Tibial artery (tissue), 4 donors: ENCODE measurements at regions of chr19 and their contacts with region 1.

Region 1: DNA sequence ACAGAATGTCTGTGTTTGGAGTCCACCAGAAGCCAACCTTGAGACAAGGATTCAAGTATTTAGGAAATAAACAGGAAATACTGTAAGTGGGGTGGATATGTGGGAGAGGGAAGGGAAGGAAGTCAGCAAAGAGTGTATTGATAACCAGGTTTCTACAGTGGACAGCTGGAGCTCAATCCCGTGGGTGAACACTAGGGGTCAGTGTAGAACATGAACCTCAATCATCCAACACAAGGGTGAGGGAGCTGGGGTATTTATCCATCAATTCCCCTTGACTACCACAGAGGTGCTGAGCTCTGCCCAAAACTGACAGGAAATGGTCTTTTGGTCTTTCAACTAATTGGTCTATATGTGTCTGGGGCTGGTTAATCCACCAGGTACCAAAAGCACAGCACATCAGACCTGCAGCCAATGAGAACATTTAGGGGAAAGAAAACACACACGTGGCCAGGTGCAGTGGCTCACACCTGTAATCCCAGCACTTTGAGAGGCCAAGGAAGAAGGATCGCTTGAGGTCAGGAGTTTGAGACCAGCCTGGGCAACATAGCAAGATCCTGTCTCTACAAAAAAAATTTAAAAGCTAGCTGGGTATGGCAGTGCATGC is 5.6 kb upstream of the SYDE1 start:
- DNase-seq: no peak
- H3K4me3 ChIP-seq: no peak overlapping the region
- H3K27ac ChIP-seq: no peak overlapping the region
- H3K4me1 ChIP-seq: peaks cover 0 to 4% (median 0%) of the 10 kb centered on the region in 4 donors
- H3K27me3 ChIP-seq: no peaks in the 10 kb centered on the region
- CTCF ChIP-seq: peak; percentile 64 to 65

Region 2: DNA sequence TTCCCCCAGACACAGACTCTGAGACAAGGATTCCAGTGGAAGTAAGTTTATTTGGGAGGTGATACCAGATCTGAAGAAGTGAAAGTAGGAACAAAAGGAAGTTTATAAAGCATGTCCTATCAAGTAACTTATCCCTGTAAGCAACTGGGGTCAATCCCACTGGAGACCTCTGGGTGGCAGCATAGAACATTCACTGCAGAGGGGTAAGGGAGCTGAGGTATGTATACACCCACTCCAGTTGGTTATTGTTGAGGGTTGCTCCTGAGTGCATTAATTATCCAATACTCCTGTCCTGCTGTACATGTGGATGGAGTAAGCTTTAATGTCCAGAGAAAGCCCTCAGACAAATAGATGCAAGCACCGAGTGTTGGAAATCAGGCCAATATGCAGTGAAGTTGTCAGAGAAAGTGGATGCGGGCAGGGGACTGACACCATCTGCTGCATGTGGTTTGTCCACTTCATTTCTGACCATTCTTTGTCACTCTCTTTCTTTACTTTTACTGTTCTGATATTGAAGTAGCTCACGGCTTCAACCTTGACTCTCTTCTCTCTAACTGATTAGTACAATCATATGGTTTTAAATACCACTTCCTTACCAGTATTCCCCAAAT is 52.5 kb after region 1 on chr19:
- intact Hi-C with region 1: loop called (anchors 5 kb)
- DNase-seq: peak in 1 of 2 donors; percentile 53
- H3K4me3 ChIP-seq: no peak overlapping the region
- H3K27ac ChIP-seq: no peak overlapping the region
- H3K4me1 ChIP-seq: no peaks in the 10 kb centered on the region
- H3K27me3 ChIP-seq: no peaks in the 10 kb centered on the region
- CTCF ChIP-seq: peak; percentile 31 to 45